Vagina (tissue), 2 donors: ENCODE measurements at regions of chr2 and their contacts with region 1.

Region 1: DNA sequence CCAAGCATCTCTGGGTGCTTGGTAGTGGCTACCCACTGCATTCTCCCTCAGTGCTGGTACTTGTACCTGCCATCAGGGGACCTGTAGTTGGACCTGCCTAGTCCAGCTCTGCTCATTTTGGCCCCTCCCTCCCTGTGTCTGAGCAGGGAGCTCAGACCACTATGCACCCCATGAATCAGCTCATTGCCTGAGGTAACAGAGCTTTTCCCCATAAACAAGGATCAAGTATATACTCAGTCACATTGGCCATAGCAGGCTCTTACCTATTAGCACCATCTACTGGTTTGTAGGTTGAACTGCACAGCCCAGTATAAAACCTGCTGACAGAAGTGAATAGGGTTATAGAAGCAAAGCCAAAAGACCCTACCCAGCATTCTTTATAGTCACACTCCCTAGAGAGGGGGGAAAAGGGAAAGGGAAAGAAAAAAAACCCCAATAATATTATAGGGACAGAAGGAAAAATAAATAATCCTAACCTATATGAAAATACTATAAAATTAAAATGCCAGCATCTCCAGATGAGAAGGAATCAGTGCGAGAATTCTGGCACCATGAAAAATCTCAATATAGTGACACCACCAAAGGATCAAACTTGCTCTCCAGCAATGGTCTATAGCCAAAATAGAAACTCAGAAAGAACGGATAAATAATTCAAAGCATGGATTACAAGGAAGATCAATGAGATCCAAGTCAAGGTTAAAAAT is 6.9 kb upstream of the FLACC1 start:
- DNase-seq: no peak
- H3K4me3 ChIP-seq: no peak overlapping the region
- H3K27ac ChIP-seq: no peak overlapping the region
- H3K4me1 ChIP-seq: no peaks in the 10 kb centered on the region
- H3K27me3 ChIP-seq: no peaks in the 10 kb centered on the region
- CTCF ChIP-seq: peak; percentile 26 to 59 (median 35)
- POLR2A ChIP-seq: no peak

Region 2: DNA sequence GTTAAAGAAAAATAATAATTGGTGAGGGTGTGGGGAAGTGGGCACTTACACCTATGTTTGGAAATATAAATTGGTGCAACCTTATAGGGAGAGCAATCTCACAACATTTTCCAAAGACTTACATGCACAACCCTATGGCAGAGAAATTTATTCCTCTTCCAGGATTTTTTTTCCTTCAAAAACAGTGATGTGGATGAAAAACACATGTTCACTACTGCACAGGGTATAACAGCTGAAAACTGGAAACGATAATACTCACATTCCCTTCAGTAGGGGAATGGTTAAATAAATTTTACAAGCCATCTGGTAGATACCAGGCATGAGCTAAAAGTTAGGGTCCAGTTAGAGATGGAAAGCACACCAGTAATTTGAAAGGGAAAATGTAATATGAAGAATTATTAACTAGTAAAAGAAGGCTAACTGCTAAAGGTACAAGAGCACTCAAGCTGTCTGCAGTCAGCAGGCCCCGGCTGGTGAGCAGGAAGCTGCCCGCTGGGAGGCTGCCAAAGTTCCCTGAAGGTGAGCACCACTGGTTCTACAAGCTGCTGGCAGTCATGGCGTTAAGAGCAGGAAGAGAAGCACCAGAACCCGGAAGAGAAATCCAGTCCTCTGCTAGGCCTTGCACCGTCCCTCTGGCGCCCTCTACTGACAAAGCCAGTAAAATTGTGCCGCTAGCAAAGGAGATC is 132.1 kb before region 1 on chr2:
- intact Hi-C with region 1: loop called (anchors 10 kb)
- DNase-seq: peak; percentile 93 to 99
- H3K4me3 ChIP-seq: no peak overlapping the region
- H3K27ac ChIP-seq: peak overlapping the region; percentile 59
- H3K4me1 ChIP-seq: peaks cover 29% of the 10 kb centered on the region
- H3K27me3 ChIP-seq: no peaks in the 10 kb centered on the region
- CTCF ChIP-seq: peak; percentile 66 to 68 (median 67)
- POLR2A ChIP-seq: no peak